Ovary (tissue), 10 donors: ENCODE measurements at regions of chr1 and their contacts with region 1.

Region 1: DNA sequence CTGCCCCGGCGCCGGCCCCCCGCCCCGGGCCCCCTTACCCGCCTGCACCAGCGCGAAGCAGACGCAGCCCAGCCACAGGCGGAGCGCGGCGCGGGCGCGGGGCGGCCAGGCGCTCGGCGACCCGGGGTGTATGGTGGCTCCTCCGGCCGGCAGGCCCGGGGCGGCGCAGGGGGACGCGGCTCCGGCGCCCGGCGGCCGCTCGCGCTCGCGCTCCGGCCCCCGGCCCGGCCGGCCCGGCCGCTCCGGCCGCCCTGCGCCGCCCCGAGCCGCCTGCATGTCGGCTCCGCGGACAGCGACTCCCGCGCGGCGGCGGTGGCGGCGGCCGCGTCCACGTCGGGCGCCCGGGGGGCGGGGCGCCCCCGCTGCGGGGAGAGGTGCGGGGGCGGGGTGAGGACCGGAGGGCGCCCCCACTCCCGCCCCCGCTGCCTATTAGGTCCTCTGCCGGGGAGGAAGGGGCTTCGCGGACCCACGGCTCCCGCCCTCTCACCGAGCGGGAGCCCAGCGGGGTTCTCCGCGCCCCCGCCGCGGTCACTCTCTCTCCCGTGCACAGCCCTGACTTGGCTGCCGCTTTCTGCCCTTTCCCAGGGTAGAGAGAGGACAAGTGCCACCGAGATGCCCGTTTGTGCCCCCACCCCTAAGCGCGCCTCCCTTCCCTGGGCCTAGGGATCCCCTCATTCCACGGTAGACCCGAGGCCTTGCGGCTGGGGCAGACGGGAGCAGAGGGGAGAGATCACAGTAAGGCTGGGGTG is at the start of gene FNDC5:
- DNase-seq: peak; percentile 51 to 79 (median 56)
- H3K4me3 ChIP-seq: peak within 1 kb of the TSS; percentile 37
- H3K27ac ChIP-seq: peak within 1 kb of the TSS in 1 of 2 donors; percentile 5
- H3K4me1 ChIP-seq: peaks cover 4% of the 10 kb centered on the region
- H3K27me3 ChIP-seq: no peaks in the 10 kb centered on the region
- CTCF ChIP-seq: no peak
- EP300 ChIP-seq: no peak
- POLR2A ChIP-seq: no peak
- total RNA-seq, gene FNDC5: 4.2 to 25.4 (median 12.1) TPM

Region 2: GRCh38 chr1:32773018-32773763 is 97.6 kb before region 1 on chr1:
- intact Hi-C with region 1: loop called in 1 of 4 experiments (anchors 5 kb)
- DNase-seq: peak; percentile 81 to 90 (median 87)
- H3K4me3 ChIP-seq: no peak overlapping the region
- H3K27ac ChIP-seq: peak overlapping the region in 1 of 2 donors; percentile 8
- H3K4me1 ChIP-seq: peaks cover 9% of the 10 kb centered on the region
- H3K27me3 ChIP-seq: no peaks in the 10 kb centered on the region
- CTCF ChIP-seq: peak; percentile 79 to 92 (median 91)
- EP300 ChIP-seq: no peak
- POLR2A ChIP-seq: no peak

Region 3: GRCh38 chr1:32848354-32849063 is 22.3 kb before region 1 on chr1:
- intact Hi-C with region 1: no loop called
- DNase-seq: no peak
- H3K4me3 ChIP-seq: no peak overlapping the region
- H3K27ac ChIP-seq: no peak overlapping the region
- H3K4me1 ChIP-seq: no peaks in the 10 kb centered on the region
- H3K27me3 ChIP-seq: no peaks in the 10 kb centered on the region
- CTCF ChIP-seq: no peak
- EP300 ChIP-seq: no peak
- POLR2A ChIP-seq: no peak